ENCODE measurements at regions of chrX and their contacts with region 1.

Region 1: GRCh38 chrX:107672955-107673378 is 44.7 kb downstream of the PRPS1 start:
- DNase-seq: peak; percentile 84
- ATAC-seq: peak; percentile 39
- H3K4me3 ChIP-seq: 0 out of 2 replicates have a peak overlapping the region, but pooled peaks have one; percentile 12
- H3K27ac ChIP-seq: peak overlapping the region; percentile 30; the same call in 1 of the 2 replicates
- H3K4me1 ChIP-seq: peaks cover 28% of the 10 kb centered on the region
- H3K27me3 ChIP-seq: no peaks in the 10 kb centered on the region
- CTCF ChIP-seq: peak; percentile 66

Region 2: DNA sequence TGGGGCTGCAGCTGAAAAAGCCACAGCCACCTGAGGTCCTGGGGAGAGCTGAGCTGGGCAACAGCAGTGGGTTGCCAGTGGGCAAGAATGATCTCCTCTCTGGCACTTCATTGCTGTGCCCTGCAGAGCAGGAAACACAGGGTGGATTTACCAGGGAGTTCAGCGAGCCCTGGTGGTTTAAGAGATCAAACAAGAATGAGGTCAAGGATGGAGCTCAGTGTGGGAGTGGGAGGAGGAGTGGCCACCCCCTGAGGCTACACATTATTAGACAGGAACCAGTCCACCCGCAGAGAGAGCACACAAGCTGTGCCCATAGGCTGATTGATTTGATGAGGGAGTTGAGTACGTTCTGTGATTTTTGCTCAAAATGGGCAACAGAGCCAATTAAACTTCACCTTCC is 176.2 kb before region 1 on chrX:
- CTCF ChIA-PET with region 1: no interaction called
- POLR2A ChIA-PET with region 1: no interaction called
- intact Hi-C with region 1: no loop called
- DNase-seq: no peak
- ATAC-seq: no peak
- H3K4me3 ChIP-seq: no peak overlapping the region
- H3K27ac ChIP-seq: no peak overlapping the region
- H3K4me1 ChIP-seq: 0 out of 2 replicates have a peak, but pooled peaks cover 4% of the 10 kb centered on the region
- H3K27me3 ChIP-seq: no peaks in the 10 kb centered on the region
- CTCF ChIP-seq: no peak

Region 3: GRCh38 chrX:107710617-107711391 is 37.8 kb after region 1 on chrX:
- CTCF ChIA-PET with region 1: interaction called, 16 read pairs
- POLR2A ChIA-PET with region 1: interaction called, 7 read pairs
- intact Hi-C with region 1: loop called (anchors 1 kb)
- DNase-seq: peak; percentile 90
- ATAC-seq: peak; percentile 84
- H3K4me3 ChIP-seq: no peak overlapping the region; the same call in 1 of the 2 replicates
- H3K27ac ChIP-seq: peak overlapping the region; percentile 84
- H3K4me1 ChIP-seq: peaks cover 19% of the 10 kb centered on the region
- H3K27me3 ChIP-seq: no peaks in the 10 kb centered on the region
- CTCF ChIP-seq: no peak

Region 4: GRCh38 chrX:107716816-107717700 is 44.1 kb after region 1 on chrX:
- CTCF ChIA-PET with region 1: interaction called, 16 read pairs
- POLR2A ChIA-PET with region 1: interaction called, 3 read pairs
- intact Hi-C with region 1: loop called (anchors 1 kb)
- DNase-seq: peak; percentile 69
- ATAC-seq: peak; percentile 64
- H3K4me3 ChIP-seq: peak overlapping the region; percentile 92
- H3K27ac ChIP-seq: peak overlapping the region; percentile 25; the same call in 1 of the 2 replicates
- H3K4me1 ChIP-seq: peaks cover 19% of the 10 kb centered on the region
- H3K27me3 ChIP-seq: no peaks in the 10 kb centered on the region
- CTCF ChIP-seq: no peak

Region 5: DNA sequence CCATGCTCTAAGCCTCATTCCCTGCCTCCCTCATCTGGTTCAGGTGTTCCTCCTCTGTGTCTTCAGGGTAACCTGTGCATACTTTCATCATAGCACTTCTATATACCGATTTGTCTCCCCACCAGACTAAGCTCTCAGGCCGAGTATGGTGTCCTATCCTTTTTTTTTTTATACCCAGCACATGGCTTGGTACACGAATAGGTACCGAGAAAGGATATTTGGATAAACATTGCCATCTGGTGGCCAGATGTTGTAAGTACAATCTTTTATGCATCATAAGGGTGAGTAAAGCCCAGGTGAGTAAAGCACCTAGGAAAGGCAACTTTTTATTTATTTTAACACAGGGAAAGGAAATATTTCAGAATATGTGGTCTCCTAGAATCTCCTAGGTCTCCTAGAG is 221.1 kb after region 1 on chrX:
- CTCF ChIA-PET with region 1: interaction called, 3 read pairs
- POLR2A ChIA-PET with region 1: no interaction called
- intact Hi-C with region 1: loop called (anchors 5 kb)
- DNase-seq: peak; percentile 77
- ATAC-seq: peak; percentile 77
- H3K4me3 ChIP-seq: no peak overlapping the region
- H3K27ac ChIP-seq: no peak overlapping the region
- H3K4me1 ChIP-seq: no peaks in the 10 kb centered on the region
- H3K27me3 ChIP-seq: no peaks in the 10 kb centered on the region
- CTCF ChIP-seq: peak; percentile 76

Measured in PC-3 (cell line).